Sigmoid colon (tissue), 7 donors: ENCODE measurements at regions of chr6 and their contacts with region 1.

Region 1: DNA sequence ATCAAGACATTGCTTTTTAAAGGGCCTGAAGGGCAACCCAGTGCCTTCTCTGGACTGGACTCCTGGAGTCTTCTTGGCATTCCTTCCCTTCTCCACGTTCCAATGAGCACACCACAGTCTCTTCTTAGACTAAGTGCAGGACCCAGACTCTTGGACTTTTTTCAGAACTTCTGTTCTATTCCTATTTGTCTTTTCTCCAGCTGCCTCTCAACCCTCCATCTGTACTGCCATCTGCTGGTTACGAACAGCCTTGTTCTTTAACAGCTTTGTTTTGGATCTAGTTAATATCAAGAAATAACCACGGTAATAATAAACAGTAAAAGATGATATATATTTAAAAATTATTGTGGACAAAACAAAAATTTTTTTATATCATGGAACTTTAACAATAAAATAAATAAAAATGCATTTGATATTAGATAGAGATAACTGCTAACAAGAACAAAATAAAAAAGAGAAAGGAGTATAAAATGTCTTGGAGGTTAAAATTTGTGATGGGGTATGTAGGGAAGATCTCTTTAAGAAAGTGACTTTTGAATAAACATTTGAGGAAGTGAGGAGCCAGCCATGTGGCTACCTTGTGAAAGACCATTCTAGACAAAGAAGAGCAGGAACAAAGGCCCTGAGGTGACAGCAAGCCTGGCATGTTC is 105.1 kb upstream of the HCRTR2 start:
- DNase-seq: no peak
- H3K4me3 ChIP-seq: no peak overlapping the region
- H3K27ac ChIP-seq: no peak overlapping the region
- H3K4me1 ChIP-seq: peaks cover 0 to 6% (median 0%) of the 10 kb centered on the region in 4 donors
- H3K27me3 ChIP-seq: no peaks in the 10 kb centered on the region
- CTCF ChIP-seq: peak in 3 of 4 experiments; percentile 12 to 38 (median 31)
- EP300 ChIP-seq: no peak
- POLR2A ChIP-seq: no peak

Region 2: GRCh38 chr6:53825532-53826321 is 1243.5 kb before region 1 on chr6:
- intact Hi-C with region 1: no loop called
- DNase-seq: no peak
- H3K4me3 ChIP-seq: no peak overlapping the region
- H3K27ac ChIP-seq: peak overlapping the region in 3 of 4 donors; percentile 30 to 56 (median 51)
- H3K4me1 ChIP-seq: peaks cover 0 to 87% (median 67%) of the 10 kb centered on the region in 4 donors
- H3K27me3 ChIP-seq: no peaks in the 10 kb centered on the region
- CTCF ChIP-seq: no peak
- EP300 ChIP-seq: no peak
- POLR2A ChIP-seq: no peak

Region 3: DNA sequence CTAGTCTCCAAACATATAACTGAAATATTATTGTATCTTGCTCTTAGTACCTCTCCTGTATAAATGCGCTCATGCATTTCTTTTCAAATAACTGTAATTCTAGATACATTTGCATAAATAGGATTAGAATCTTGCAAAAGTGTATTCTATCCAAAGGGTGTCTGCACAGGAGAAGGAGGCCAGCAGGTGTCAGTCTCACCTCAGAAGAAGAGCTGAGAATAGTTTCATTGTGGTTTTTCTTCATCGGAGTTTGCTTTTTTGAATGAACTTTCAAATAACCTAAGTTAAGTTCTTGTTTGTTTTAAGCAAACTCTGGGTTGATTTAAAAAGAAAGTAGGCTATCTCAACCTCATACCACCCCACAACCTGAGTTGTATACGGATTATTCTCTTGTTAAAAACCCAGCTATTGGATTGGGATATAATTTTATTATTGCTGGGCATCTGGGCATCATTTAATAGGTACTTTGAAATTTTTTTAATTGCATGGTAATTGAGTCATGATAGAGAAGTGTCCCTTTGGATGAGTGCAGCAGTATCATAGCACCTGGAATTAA is 1083.0 kb before region 1 on chr6:
- intact Hi-C with region 1: loop called (anchors 10 kb)
- DNase-seq: no peak
- H3K4me3 ChIP-seq: no peak overlapping the region
- H3K27ac ChIP-seq: no peak overlapping the region
- H3K4me1 ChIP-seq: peaks cover 0 to 15% (median 13%) of the 10 kb centered on the region in 4 donors
- H3K27me3 ChIP-seq: no peaks in the 10 kb centered on the region
- CTCF ChIP-seq: peak in 3 of 4 experiments; percentile 54 to 72 (median 62)
- EP300 ChIP-seq: no peak
- POLR2A ChIP-seq: no peak

Region 4: GRCh38 chr6:54717849-54718455 is 351.3 kb before region 1 on chr6:
- intact Hi-C with region 1: loop called (anchors 5 kb)
- DNase-seq: no peak
- H3K4me3 ChIP-seq: no peak overlapping the region
- H3K27ac ChIP-seq: no peak overlapping the region
- H3K4me1 ChIP-seq: no peaks in the 10 kb centered on the region
- H3K27me3 ChIP-seq: no peaks in the 10 kb centered on the region
- CTCF ChIP-seq: peak; percentile 17 to 62 (median 55)
- EP300 ChIP-seq: no peak
- POLR2A ChIP-seq: no peak

Region 5: DNA sequence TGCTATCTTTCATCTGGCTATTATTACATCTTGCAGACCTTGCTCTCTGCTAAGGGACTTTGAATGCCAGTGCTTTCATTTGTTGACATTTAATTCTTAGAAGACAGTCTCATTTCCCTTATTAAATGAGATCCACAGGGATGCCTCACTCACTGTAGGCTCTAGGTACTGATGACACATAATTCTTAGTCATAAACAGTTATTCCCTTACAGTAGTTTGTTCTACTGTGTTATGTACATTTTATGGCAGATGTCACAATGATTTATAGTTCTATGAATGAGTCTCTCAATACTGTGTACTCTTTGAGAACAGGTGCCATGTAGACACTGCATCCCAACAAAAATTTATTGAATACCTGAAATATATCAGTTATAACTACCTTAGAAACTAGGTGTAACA is 152.4 kb before region 1 on chr6:
- intact Hi-C with region 1: no loop called
- DNase-seq: no peak
- H3K4me3 ChIP-seq: no peak overlapping the region
- H3K27ac ChIP-seq: no peak overlapping the region
- H3K4me1 ChIP-seq: peaks cover 0 to 3% (median 0%) of the 10 kb centered on the region in 4 donors
- H3K27me3 ChIP-seq: no peaks in the 10 kb centered on the region
- CTCF ChIP-seq: no peak
- EP300 ChIP-seq: no peak
- POLR2A ChIP-seq: no peak

Region 6: GRCh38 chr6:55082021-55082420 is 12.8 kb after region 1 on chr6:
- intact Hi-C with region 1: no loop called
- DNase-seq: no peak
- H3K4me3 ChIP-seq: no peak overlapping the region
- H3K27ac ChIP-seq: no peak overlapping the region
- H3K4me1 ChIP-seq: no peaks in the 10 kb centered on the region
- H3K27me3 ChIP-seq: no peaks in the 10 kb centered on the region
- CTCF ChIP-seq: no peak
- EP300 ChIP-seq: no peak
- POLR2A ChIP-seq: no peak